MCF 10A (cell line): ENCODE measurements at regions of chr2 and their contacts with region 1.

Region 1: DNA sequence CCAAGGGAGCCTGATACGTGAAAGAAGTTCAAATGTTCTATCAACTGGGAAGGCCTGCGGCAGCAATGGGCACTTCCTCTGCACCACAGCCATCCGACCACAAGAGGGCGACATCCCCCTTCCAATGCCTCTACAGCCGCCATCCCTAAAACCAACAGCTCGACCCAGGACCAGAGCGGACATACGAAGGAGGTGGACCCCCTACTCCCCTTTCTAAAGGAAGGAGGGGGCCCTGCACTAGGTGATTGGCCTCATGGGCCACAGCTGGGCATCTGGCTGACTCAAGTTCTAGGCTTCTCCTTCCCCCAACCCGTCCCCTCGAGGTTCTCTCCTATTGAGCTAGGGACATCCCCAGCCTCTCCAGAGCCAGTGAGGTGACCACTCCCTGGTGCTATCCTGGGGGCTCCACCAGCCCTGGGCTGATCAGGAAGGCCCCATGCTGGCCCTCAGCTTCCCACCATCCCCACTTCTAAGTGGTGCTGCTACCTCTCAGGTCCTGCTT is 217.2 kb downstream of the TNS1 start:
- DNase-seq: peak; percentile 62
- H3K4me3 Mint-ChIP-seq: no peak overlapping the region
- H3K27ac Mint-ChIP-seq: no peak overlapping the region
- H3K4me1 Mint-ChIP-seq: peaks cover 5% of the 10 kb centered on the region
- H3K27me3 Mint-ChIP-seq: peaks cover 16% of the 10 kb centered on the region
- CTCF ChIP-seq: peak; percentile 95

Region 2: DNA sequence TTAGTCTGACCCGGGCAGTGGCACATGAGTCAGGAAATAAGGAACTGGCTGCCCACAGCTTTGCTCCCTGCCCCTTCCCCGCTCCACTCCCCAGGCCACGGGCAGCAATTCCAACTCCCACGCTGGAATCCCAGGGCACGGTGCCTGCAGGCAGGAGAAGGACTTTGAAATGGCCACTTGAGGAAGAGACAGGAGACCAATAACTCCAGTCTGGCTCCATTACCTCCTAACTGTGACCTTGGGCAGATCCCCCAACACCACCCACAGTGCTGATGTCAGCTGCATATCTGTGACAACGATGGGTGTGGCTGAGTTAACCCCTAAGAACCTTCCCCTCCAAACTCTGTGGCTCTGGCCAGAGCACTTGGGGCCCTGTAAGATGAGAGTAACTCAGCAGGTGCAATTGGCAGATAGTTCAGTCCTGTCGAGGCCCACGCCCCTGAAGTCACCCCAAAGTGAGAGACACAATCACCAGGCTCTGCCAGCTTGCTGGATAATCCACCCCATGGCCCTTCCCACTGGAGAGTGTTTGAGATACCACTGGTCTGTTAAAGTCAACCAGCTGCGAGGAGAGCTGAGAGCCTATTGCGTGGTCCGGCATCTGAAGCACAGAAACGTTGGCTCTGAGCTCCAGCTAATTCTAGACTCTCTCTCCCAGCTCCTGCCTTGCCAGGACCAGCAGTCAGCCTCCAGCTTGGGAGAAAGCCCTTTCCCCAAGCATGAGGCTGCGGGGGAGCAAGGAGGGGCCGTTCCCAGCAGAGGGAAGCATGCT is 42.0 kb after region 1 on chr2:
- CTCF ChIA-PET with region 1: interaction called, 29 read pairs
- POLR2A ChIA-PET with region 1: interaction called, 3 read pairs
- intact Hi-C with region 1: no loop called
- DNase-seq: no peak
- H3K4me3 Mint-ChIP-seq: no peak overlapping the region
- H3K27ac Mint-ChIP-seq: peak overlapping the region; percentile 61
- H3K4me1 Mint-ChIP-seq: peaks cover 20% of the 10 kb centered on the region
- H3K27me3 Mint-ChIP-seq: no peaks in the 10 kb centered on the region
- CTCF ChIP-seq: no peak

Region 3: GRCh38 chr2:217886720-217887309 is 101.2 kb after region 1 on chr2:
- CTCF ChIA-PET with region 1: interaction called, 678 read pairs
- POLR2A ChIA-PET with region 1: interaction called, 8 read pairs
- intact Hi-C with region 1: loop called (anchors 1 kb)
- DNase-seq: peak; percentile 87
- H3K4me3 Mint-ChIP-seq: no peak overlapping the region
- H3K27ac Mint-ChIP-seq: no peak overlapping the region
- H3K4me1 Mint-ChIP-seq: no peaks in the 10 kb centered on the region
- H3K27me3 Mint-ChIP-seq: peaks cover 13% of the 10 kb centered on the region
- CTCF ChIP-seq: peak; percentile 75

Region 4: DNA sequence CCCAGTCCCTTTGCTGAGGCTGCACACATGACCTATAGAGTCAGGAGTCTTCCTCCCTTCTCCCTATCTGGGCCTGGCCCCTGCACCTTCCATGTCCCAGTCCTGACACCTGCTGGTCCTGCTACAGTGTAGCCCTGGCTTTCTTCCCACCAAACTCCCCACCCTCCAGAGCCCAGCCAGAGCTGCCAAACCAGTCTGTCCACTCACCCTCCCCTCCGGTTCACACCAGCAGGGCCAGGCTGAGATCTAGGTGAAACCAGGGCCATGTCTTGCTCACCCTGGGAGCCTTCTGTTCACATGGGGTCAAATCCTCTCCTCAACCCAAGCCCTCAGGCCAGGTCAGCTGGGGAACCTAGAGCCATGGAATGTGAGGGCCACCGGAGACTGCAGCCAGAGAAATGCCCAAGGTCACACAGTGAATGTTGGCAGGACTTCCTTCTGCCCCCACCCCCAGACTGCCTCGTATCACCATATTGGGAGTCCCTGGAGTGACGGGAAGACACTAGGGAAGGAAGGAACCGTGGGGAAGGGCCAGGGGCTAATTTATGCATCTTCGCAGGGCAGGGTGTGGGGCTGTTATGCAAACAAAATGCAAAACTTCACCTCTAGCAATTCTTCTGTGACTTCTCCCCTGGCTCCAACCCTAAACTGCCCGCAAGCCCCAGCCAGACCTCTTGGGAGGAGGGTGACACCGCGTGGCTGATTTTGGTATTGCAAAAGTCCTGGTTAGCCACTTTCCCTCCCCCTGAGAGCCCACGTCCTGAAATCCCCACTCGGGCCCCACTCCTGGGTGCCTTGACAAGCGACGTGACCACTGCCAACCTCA is 202.6 kb after region 1 on chr2:
- CTCF ChIA-PET with region 1: interaction called, 350 read pairs
- POLR2A ChIA-PET with region 1: no interaction called
- intact Hi-C with region 1: loop called (anchors 1 kb)
- DNase-seq: peak; percentile 75
- H3K4me3 Mint-ChIP-seq: no peak overlapping the region
- H3K27ac Mint-ChIP-seq: no peak overlapping the region
- H3K4me1 Mint-ChIP-seq: peaks cover 7% of the 10 kb centered on the region
- H3K27me3 Mint-ChIP-seq: no peaks in the 10 kb centered on the region
- CTCF ChIP-seq: peak; percentile 93

Region 5: GRCh38 chr2:218046238-218046637 is 260.6 kb after region 1 on chr2:
- CTCF ChIA-PET with region 1: interaction called, 28 read pairs
- POLR2A ChIA-PET with region 1: no interaction called
- intact Hi-C with region 1: no loop called
- DNase-seq: no peak
- H3K4me3 Mint-ChIP-seq: no peak overlapping the region
- H3K27ac Mint-ChIP-seq: no peak overlapping the region
- H3K4me1 Mint-ChIP-seq: no peaks in the 10 kb centered on the region
- H3K27me3 Mint-ChIP-seq: peaks cover 59% of the 10 kb centered on the region
- CTCF ChIP-seq: no peak